Astrocyte of the cerebellum (primary cell): ENCODE measurements at regions of chrX and their contacts with region 1.

Region 1: GRCh38 chrX:73270753-73271152 is 56.1 kb upstream of the NAP1L2 start:
- DNase-seq: no peak
- H3K4me3 ChIP-seq: no peak overlapping the region
- CTCF ChIP-seq: no peak

Region 2: DNA sequence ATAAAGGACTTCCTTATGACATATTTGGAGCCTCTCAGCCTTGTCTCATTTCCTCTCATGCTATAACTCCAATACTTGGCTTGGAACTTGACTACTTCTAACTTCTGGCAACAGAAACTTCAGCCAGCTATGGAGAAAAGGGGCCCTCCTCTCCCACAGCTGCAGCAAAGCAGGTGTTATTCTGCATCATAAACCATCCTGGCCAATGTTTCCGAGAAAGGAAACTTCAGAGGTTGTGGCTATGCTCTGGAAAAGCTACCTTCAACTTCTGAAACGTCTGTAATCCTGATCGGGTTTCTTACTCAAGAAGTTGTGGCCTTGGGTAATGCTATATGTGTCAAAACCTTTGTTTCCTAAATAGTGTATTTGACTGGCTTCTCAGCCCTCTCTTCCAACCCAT is 66.6 kb after region 1 on chrX:
- in situ Hi-C with region 1: loop called (anchors 5 kb)
- DNase-seq: no peak
- H3K4me3 ChIP-seq: no peak overlapping the region
- CTCF ChIP-seq: no peak